ENCODE measurements at regions of chr1 and their contacts with region 1.

Region 1: GRCh38 chr1:67760030-67760821 is 73.0 kb downstream of the GNG12 start:
- DNase-seq: peak; percentile 84
- H3K4me3 ChIP-seq: no peak overlapping the region
- H3K27ac ChIP-seq: peak overlapping the region; percentile 39
- H3K4me1 ChIP-seq: peaks cover 30% of the 10 kb centered on the region
- CTCF ChIP-seq: peak; percentile 100

Region 2: GRCh38 chr1:67535474-67535873 is 224.8 kb before region 1 on chr1:
- CTCF ChIA-PET with region 1: interaction called, 20 read pairs
- POLR2A ChIA-PET with region 1: interaction called, 7 read pairs
- intact Hi-C with region 1: loop called (anchors 1 kb)
- DNase-seq: peak; percentile 62
- H3K4me3 ChIP-seq: no peak overlapping the region
- H3K27ac ChIP-seq: no peak overlapping the region
- H3K4me1 ChIP-seq: no peaks in the 10 kb centered on the region
- CTCF ChIP-seq: peak; percentile 94

Region 3: DNA sequence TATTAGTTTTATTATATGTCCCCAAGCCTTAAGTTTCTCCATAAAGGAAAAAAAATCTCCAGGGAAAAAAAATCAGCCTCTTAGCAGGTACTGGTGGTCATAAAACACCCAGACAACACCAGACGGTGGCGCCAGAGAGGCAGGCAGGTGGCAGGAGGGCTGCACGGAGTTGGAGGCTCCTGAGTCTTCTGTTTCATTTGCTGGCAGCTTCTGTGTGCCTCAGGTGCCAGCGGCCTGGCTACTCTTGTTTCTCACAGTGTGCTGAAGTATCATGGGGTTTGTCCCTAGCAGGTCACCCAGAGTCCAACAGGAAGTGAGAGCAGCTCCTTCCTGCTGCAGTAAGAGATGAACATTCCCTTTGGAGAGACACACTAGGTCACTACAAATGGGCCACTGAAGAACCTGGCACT is 198.5 kb before region 1 on chr1:
- CTCF ChIA-PET with region 1: interaction called, 25 read pairs
- POLR2A ChIA-PET with region 1: interaction called, 14 read pairs
- intact Hi-C with region 1: loop called (anchors 1 kb)
- DNase-seq: peak; percentile 84
- H3K4me3 ChIP-seq: no peak overlapping the region
- H3K27ac ChIP-seq: no peak overlapping the region
- H3K4me1 ChIP-seq: peaks cover 4% of the 10 kb centered on the region
- CTCF ChIP-seq: peak; percentile 98

Region 4: GRCh38 chr1:67674260-67675011 is 85.8 kb before region 1 on chr1:
- CTCF ChIA-PET with region 1: interaction called, 5 read pairs
- POLR2A ChIA-PET with region 1: interaction called, 16 read pairs
- intact Hi-C with region 1: no loop called
- DNase-seq: peak; percentile 77
- H3K4me3 ChIP-seq: peak overlapping the region; percentile 20
- H3K27ac ChIP-seq: peak overlapping the region; percentile 85
- H3K4me1 ChIP-seq: peaks cover 48% of the 10 kb centered on the region
- CTCF ChIP-seq: no peak

Region 5: GRCh38 chr1:67741121-67741520 is 19.1 kb before region 1 on chr1:
- CTCF ChIA-PET with region 1: interaction called, 11 read pairs
- POLR2A ChIA-PET with region 1: interaction called, 40 read pairs
- intact Hi-C with region 1: loop called (anchors 1 kb)
- DNase-seq: no peak
- H3K4me3 ChIP-seq: no peak overlapping the region
- H3K27ac ChIP-seq: peak overlapping the region; percentile 84
- H3K4me1 ChIP-seq: peaks cover 78% of the 10 kb centered on the region
- CTCF ChIP-seq: 0 out of 2 replicates have a peak, but pooled peaks have one; percentile 2